ENCODE measurements at regions of chr1 and their contacts with region 1.

Region 1: GRCh38 chr1:110312188-110313121 is 26.7 kb upstream of the RBM15 start:
- DNase-seq: peak; percentile 83 to 89 (median 85)
- ATAC-seq: peak; percentile 89 to 96 (median 94)
- H3K4me3 ChIP-seq: no peak overlapping the region
- H3K27ac ChIP-seq: no peak overlapping the region
- H3K4me1 ChIP-seq: peaks cover 0 to 50% (median 17%) of the 10 kb centered on the region in 12 donors
- H3K27me3 ChIP-seq: no peaks in the 10 kb centered on the region
- CTCF ChIP-seq: peak; percentile 84 to 98 (median 94)
- POLR2A ChIP-seq: no peak

Region 2: DNA sequence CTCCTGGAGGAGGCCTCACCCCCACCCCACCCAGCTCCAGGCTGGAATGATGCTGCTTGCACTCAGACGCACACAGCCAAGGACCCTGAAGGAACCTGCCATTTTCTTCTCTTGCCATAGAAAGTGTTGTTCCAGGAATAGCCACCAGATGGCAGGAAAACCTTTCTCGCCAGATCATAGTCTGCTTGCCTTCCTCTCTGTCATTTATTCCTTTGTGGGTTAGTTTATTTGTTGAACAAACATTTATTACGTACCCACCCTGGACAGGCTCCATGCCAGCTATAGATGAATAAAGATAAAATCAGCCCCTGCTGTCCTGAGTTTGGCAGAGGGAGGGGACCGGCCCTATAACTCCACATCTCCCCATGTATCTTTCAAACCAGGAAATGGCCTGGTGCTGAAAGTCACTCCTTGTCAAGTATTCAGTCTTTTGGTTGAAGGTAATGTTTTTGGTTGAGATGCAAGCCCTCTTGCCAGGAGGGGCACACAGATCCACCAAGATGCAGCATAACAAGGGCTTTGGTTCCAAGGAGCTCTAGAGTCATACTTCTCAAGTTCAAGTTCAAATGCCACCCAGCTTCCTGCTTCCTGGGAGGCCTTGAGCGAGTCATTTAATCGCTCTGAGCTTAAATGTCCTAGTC is 109.3 kb before region 1 on chr1:
- intact Hi-C with region 1: loop called (anchors 1 kb)
- DNase-seq: peak in 2 of 5 donors; percentile 43 to 44
- ATAC-seq: peak; percentile 30 to 57 (median 46)
- H3K4me3 ChIP-seq: no peak overlapping the region
- H3K27ac ChIP-seq: no peak overlapping the region
- H3K4me1 ChIP-seq: peaks cover 0 to 11% (median 0%) of the 10 kb centered on the region in 12 donors
- H3K27me3 ChIP-seq: no peaks in the 10 kb centered on the region
- CTCF ChIP-seq: peak; percentile 78 to 93 (median 86)
- POLR2A ChIP-seq: no peak

Region 3: GRCh38 chr1:110229348-110230001 is 83.0 kb before region 1 on chr1:
- intact Hi-C with region 1: no loop called
- DNase-seq: no peak
- ATAC-seq: no peak
- H3K4me3 ChIP-seq: no peak overlapping the region
- H3K27ac ChIP-seq: no peak overlapping the region
- H3K4me1 ChIP-seq: peaks cover 0 to under 1% (median 0%) of the 10 kb centered on the region in 12 donors
- H3K27me3 ChIP-seq: no peaks in the 10 kb centered on the region
- CTCF ChIP-seq: no peak
- POLR2A ChIP-seq: no peak

Region 4: GRCh38 chr1:110455151-110455550 is 142.7 kb after region 1 on chr1:
- intact Hi-C with region 1: loop called in 9 of 10 experiments (anchors 2 to 10 kb)
- DNase-seq: no peak
- ATAC-seq: peak in 1 of 4 donors; percentile 41
- H3K4me3 ChIP-seq: no peak overlapping the region
- H3K27ac ChIP-seq: no peak overlapping the region
- H3K4me1 ChIP-seq: no peaks in the 10 kb centered on the region
- H3K27me3 ChIP-seq: peaks cover 0 to 15% (median 0%) of the 10 kb centered on the region in 9 donors
- CTCF ChIP-seq: no peak
- POLR2A ChIP-seq: no peak

Measured in heart left ventricle (tissue), 16 donors.